AG04450 (cell line): ENCODE measurements at regions of chr15 and their contacts with region 1.

Region 1: DNA sequence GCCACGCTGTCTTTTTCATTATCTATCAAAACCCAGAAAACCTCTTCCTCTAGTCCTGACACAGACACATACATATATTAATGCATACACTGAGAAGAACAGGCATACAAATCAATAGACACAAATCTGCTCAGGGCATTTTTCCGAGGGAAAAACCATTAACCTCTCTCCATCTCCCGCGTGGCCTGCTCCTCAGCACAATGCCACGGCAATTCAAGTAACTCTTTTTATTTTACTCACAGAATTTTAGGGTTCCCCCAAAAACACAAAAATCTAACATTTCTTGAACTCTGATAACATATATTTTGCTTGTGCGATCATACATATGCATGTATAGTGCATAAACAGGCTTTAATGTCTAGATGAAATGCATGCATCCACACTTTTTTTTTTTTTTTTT is 110.8 kb upstream of the NSMCE3 start:
- DNase-seq: no peak
- H3K4me3 ChIP-seq: no peak overlapping the region
- H3K27ac ChIP-seq: no peak overlapping the region
- H3K27me3 ChIP-seq: peaks cover 6% of the 10 kb centered on the region
- CTCF ChIP-seq: no peak

Region 2: DNA sequence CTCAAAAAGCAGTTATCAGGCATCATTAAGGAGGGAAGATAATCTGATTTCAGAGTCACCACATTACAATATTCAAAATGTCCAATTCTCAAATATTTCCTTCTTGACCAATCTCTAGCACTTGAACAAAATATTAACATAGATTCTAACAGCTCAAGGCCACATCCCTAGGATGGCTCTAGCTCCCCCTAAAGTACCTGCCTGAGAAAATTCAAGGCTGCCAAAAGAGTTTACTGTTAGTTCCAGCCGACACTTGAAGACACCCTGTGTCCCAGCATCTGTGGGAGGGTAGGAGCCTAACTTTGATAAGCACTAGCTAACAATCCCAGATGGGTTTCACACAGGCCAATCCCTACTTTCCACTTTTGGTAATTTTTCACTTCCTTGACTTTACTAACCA is 121.2 kb before region 1 on chr15:
- CTCF ChIA-PET with region 1: no interaction called
- POLR2A ChIA-PET with region 1: interaction called, 12 read pairs
- DNase-seq: no peak
- H3K4me3 ChIP-seq: no peak overlapping the region
- H3K27ac ChIP-seq: no peak overlapping the region
- H3K27me3 ChIP-seq: no peaks in the 10 kb centered on the region
- CTCF ChIP-seq: no peak